Endothelial cell of umbilical vein (primary cell): ENCODE measurements at regions of chr3 and their contacts with region 1.

Region 1: DNA sequence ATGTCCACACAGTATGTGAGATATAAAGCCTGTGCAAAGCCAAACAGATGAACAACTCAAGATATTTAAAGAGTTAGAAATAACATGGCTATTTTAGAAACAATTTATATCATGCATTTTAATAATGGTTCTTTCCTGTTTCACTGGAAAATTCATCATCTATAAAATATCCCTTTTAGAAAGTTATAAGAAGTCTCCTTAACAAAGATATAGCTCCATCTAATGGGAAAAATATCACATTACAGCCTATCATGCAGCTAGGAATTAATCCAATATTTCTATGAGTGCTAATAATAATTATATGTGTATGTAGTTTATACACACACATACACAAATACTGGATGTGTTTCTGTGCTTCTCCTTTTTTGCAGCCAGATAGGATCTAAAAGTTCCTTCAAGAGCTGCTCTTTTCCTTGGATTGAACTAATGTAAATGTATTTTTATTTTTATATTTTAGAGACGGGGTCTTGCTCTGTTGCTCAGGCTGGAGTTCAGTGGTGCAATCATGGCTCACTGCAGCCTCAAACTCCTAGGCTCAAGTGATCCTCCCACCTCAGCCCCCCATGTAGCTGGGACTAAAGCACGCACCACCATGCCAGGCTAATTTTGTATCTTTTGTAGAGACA is 21.6 kb downstream of the RPL22L1 start:
- DNase-seq: peak; percentile 38
- H3K4me3 ChIP-seq: no peak overlapping the region
- H3K27ac ChIP-seq: no peak overlapping the region
- H3K4me1 ChIP-seq: no peaks in the 10 kb centered on the region
- H3K27me3 ChIP-seq: no peaks in the 10 kb centered on the region
- CTCF ChIP-seq: peak in 1 of 2 donors; percentile 14
- POLR2A ChIP-seq: no peak

Region 2: DNA sequence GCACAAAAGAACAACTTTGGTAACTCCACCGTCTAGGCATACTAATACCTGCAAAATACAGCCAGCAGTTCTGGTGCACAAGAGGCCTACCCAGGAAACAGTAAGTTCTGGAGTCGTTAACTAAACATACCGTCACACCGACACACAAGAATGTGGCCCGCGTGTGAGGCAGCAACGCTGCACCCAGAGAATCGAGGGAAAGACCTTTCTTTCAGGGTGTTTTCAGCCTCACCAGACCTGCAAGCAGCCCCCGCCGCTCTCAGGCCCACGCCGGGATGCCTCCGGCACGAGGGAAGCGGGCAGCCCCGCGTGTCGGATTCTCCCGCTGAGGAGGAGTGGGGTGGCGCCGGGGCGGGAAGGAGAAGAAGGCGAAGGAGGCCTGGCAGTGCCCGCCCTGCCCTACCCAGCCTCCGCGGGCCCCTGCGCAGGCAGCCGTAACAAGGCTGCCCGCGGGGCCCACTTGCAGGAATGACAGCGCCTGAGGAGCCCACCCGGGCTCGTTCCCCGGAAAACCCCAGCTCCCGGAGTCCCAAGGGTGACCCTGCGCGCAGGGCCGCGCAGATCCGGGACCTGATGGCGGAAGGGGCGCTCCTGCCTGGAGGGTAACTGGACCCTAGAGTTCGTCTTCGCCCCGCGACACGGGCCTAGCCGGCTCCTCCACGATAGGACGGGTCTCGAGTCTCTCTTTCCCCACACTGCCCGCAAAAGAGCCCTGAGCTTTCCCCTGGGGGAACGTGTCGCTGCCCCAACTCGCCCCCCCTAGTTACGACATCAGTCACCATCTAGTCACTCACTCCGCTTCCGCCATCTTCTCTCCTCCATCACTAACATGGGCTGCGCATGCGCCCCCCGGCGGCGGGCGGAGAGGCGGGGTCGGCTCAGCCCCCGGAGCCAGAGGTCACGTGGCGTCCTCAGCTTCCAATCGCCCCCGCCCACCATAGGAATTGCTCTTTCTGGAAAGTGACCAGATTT is 667.2 kb before region 1 on chr3 and contains the start of gene PHC3:
- CTCF ChIA-PET with region 1: no interaction called
- POLR2A ChIA-PET with region 1: no interaction called
- dilution Hi-C with region 1: no loop called
- intact Hi-C with region 1: loop called (anchors 10 kb)
- DNase-seq: peak; percentile 95
- H3K4me3 ChIP-seq: peak within 1 kb of the TSS; percentile 50 to 88 (median 77)
- H3K27ac ChIP-seq: peak within 1 kb of the TSS; percentile 44
- H3K4me1 ChIP-seq: peaks cover 11% of the 10 kb centered on the region
- H3K27me3 ChIP-seq: no peaks in the 10 kb centered on the region
- CTCF ChIP-seq: no peak
- POLR2A ChIP-seq: peak; percentile 90
- total RNA-seq, gene PHC3: 34.4 and 45.8 TPM in 2 replicates

Region 3: DNA sequence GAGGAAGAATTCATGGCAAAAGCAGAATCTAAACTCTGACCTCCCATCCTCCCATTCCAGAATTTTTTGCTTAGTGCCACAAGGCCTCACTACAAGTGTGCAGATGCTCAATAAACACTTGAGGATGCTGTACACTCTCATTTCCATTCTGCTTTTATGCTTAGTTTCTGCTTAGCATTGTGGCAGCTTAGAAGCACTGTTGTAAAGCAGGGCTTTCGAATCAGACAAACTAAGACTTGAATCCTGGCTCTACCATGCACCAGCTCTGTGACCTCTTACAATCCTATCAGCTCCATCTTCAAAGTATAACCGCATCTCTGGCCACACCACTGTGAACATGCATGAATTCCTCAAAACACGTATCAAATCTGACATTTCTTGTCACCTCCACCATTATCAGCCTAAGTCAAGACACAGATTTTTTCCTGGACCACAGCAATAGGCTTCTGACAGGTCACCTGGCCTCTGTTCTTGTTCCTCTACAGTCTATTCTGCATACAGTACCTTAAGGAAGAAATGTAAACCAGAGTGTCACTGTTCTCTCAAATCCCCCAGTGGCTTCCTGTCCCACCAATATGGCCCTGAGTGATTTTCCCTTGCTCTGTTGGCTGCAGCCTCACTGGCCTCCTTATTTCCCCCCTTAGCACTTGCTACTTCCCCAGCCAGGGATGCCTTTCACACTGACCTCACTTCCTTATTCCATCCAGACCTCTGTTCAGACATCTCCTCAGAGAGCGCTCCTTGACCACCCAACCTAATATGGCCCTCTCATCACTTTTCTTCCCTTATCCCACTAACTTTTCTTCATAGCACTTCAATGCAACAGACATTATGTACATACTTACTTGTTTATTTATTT is 658.8 kb before region 1 on chr3:
- CTCF ChIA-PET with region 1: interaction called, 10 read pairs
- POLR2A ChIA-PET with region 1: no interaction called
- dilution Hi-C with region 1: no loop called
- intact Hi-C with region 1: loop called (anchors 10 kb)
- DNase-seq: no peak
- H3K4me3 ChIP-seq: no peak overlapping the region
- H3K27ac ChIP-seq: no peak overlapping the region
- H3K4me1 ChIP-seq: no peaks in the 10 kb centered on the region
- H3K27me3 ChIP-seq: peaks cover 0 to 6% of the 10 kb centered on the region in 2 experiments
- CTCF ChIP-seq: no peak
- POLR2A ChIP-seq: no peak

Region 4: DNA sequence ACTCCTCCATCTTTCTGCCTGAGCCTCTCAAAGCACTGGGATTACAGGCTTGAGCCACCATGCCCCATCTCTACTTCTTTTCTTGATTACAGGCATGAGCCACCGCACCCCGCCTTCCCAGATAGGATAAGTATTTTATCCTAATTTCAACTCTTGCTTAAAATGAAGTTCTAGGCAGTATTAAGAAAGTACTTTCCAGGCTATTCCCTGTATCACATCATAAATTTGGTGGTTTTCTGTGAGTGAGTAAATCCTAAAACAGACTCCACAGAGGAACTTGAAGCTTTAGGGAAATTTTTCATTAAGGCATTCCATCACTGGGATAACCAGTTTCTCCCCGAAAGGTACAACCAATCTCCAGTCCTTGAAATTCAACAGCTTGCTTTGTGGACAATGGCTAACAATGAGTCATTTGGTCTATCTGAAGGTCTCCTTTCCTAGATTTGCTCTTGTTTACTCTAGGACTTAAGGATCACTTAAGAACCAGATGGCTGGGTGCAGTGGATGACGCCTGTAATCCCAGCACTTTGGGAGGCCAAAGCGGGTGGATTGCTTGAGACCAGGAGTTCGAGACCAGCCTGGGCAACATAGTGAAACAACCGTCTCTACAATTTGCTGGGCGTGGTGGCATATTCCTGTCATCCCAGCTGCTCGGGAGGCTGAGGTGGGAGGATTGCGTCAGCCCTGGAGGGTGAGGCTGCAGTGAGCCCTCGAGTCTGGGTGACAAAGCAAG is 540.6 kb before region 1 on chr3:
- CTCF ChIA-PET with region 1: interaction called, 3 read pairs
- POLR2A ChIA-PET with region 1: no interaction called
- dilution Hi-C with region 1: no loop called
- intact Hi-C with region 1: loop called (anchors 10 kb)
- DNase-seq: no peak
- H3K4me3 ChIP-seq: no peak overlapping the region
- H3K27ac ChIP-seq: no peak overlapping the region
- H3K4me1 ChIP-seq: peaks cover 7% of the 10 kb centered on the region
- H3K27me3 ChIP-seq: no peaks in the 10 kb centered on the region
- CTCF ChIP-seq: no peak
- POLR2A ChIP-seq: no peak

Region 5: DNA sequence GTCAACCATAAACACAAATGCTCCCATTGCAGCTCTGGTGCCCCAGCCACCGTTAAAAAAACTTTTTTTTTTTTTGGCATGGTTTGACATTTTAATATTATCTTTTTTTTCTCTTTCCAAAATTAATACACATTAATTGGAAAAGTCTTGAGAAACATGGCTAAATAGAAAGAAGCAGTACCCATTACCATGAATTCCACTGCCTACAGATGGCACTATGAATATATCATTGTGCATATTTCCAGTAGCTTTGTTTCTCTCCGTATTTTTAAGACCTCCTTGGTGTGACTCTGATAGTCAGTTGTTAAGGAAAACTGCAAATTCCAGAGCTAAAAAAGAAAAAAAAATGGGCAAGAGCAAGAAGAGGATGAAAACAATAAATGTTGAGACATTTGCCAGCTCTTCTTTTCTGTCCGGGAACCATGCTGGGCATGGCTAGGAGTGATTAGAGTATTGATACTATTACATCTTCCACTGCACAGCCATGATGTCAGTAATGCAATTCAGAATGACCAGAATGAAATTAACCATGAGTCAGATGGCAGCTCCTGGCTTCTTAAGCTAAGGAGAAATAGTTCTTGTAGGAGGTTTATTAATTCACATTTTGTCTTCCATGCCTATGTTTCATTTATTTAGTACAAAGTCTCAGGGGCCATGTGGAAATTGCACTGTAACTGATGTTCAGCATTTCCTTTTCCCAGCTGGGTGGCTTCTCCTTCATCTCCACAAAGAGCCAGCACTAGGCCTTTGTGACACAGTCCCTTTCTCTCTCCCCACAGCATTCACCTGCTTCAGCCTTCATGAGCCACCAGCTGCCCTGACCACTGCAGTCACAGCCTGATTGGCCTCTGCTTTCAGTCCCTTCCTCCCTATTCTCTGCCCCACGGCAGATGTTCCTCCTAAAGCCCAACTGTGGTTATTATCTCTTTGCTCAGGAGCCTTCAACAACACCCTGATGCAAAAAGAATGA is 294.3 kb before region 1 on chr3:
- CTCF ChIA-PET with region 1: interaction called, 10 read pairs
- POLR2A ChIA-PET with region 1: no interaction called
- dilution Hi-C with region 1: no loop called
- intact Hi-C with region 1: no loop called
- DNase-seq: peak; percentile 25
- H3K4me3 ChIP-seq: no peak overlapping the region
- H3K27ac ChIP-seq: no peak overlapping the region
- H3K4me1 ChIP-seq: no peaks in the 10 kb centered on the region
- H3K27me3 ChIP-seq: no peaks in the 10 kb centered on the region
- CTCF ChIP-seq: no peak
- POLR2A ChIP-seq: no peak

Region 6: GRCh38 chr3:170835336-170835735 is 13.1 kb before region 1 on chr3:
- CTCF ChIA-PET with region 1: interaction called, 22 read pairs
- POLR2A ChIA-PET with region 1: no interaction called
- dilution Hi-C with region 1: no loop called
- intact Hi-C with region 1: no loop called
- DNase-seq: no peak
- H3K4me3 ChIP-seq: no peak overlapping the region
- H3K27ac ChIP-seq: no peak overlapping the region
- H3K4me1 ChIP-seq: no peaks in the 10 kb centered on the region
- H3K27me3 ChIP-seq: peaks cover 22 to 23% of the 10 kb centered on the region in 2 experiments
- CTCF ChIP-seq: no peak
- POLR2A ChIP-seq: no peak

Region 7: GRCh38 chr3:170869645-170870593 is 21.5 kb after region 1 on chr3 and contains the start of gene RPL22L1:
- CTCF ChIA-PET with region 1: interaction called, 4 read pairs
- POLR2A ChIA-PET with region 1: interaction called, 10 read pairs
- dilution Hi-C with region 1: no loop called
- intact Hi-C with region 1: no loop called
- DNase-seq: peak; percentile 94
- H3K4me3 ChIP-seq: peak within 1 kb of the TSS; percentile 79 to 94 (median 84)
- H3K27ac ChIP-seq: peak within 1 kb of the TSS; percentile 87
- H3K4me1 ChIP-seq: peaks cover 21% of the 10 kb centered on the region
- H3K27me3 ChIP-seq: no peaks in the 10 kb centered on the region
- CTCF ChIP-seq: peak in 1 of 2 donors; percentile 13
- POLR2A ChIP-seq: peak; percentile 99
- total RNA-seq, gene RPL22L1: 159 and 176 TPM in 2 replicates

Region 8: GRCh38 chr3:170908235-170909116 is 60.1 kb after region 1 on chr3 and contains the start of gene EIF5A2:
- CTCF ChIA-PET with region 1: no interaction called
- POLR2A ChIA-PET with region 1: no interaction called
- dilution Hi-C with region 1: no loop called
- intact Hi-C with region 1: no loop called
- DNase-seq: peak; percentile 92
- H3K4me3 ChIP-seq: peak within 1 kb of the TSS; percentile 64 to 69 (median 68)
- H3K27ac ChIP-seq: peak within 1 kb of the TSS; percentile 22
- H3K4me1 ChIP-seq: peaks cover 12% of the 10 kb centered on the region
- H3K27me3 ChIP-seq: peaks cover 0 to 3% of the 10 kb centered on the region in 2 experiments
- CTCF ChIP-seq: no peak
- POLR2A ChIP-seq: peak; percentile 70
- total RNA-seq, gene EIF5A2: 10.9 and 12.3 TPM in 2 replicates